Activated T-helper 1 cell treated with anti-CD3 and anti-CD28 coated beads, Interleukin-12 subunit alpha, Interleukin-12 subunit beta, Interleukin-2, Interleukin-4 antibody, amounts not matched to agents 30 ng/mL and 10 ng/mL and 1 ng/mL, durations not matched to agents 14 hours and 24 hours and 36 hours (primary cell): ENCODE measurements at regions of chr16 and their contacts with region 1.

Region 1: GRCh38 chr16:8963825-8964441 is at the start of gene USP7:
- DNase-seq: peak; percentile 92
- H3K4me3 Mint-ChIP-seq: peak within 1 kb of the TSS; percentile 97
- H3K27ac Mint-ChIP-seq: peak within 1 kb of the TSS; percentile 93
- H3K4me1 Mint-ChIP-seq: peaks cover 41% of the 10 kb centered on the region
- H3K27me3 Mint-ChIP-seq: peaks cover 20% of the 10 kb centered on the region
- total RNA-seq, gene USP7: 184 and 188 TPM in 2 replicates

Region 2: DNA sequence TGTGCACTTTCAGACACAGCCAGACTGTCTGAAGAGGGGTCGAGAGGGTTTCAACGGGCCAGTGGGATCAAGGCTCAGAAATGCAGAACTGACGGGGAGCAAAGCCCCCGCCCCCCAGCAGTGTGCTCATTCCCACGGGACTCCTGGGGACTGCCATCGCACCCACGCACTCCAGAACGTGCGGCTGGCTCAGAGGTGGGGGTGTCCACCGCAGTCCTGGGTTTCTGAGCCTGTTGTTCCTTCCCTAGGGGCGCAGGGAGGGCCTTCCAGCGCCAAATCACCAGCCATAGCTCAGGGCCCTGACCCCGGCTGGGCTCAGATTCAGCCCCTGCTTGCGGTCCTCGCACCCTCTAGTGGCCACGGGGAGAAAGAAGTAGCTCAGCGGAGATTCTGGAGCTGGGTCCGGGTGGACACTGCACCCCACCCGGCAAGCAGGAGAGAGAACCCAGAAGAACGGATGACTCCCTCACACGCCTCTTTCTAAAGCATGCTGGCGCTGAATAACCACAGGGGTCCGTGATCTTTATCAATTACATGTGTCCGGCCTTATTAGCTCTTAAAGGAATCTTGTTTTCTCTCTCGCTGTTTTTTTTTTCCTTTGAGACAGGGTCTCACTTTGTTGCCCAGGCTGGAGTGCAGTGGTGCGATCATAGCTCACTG is 44.8 kb after region 1 on chr16:
- intact Hi-C with region 1: loop called (anchors 2 kb)
- DNase-seq: peak; percentile 42
- H3K4me3 Mint-ChIP-seq: no peak overlapping the region
- H3K27ac Mint-ChIP-seq: no peak overlapping the region
- H3K4me1 Mint-ChIP-seq: no peaks in the 10 kb centered on the region
- H3K27me3 Mint-ChIP-seq: peaks cover 8% of the 10 kb centered on the region

Region 3: GRCh38 chr16:9047686-9048301 is 83.9 kb after region 1 on chr16:
- intact Hi-C with region 1: loop called (anchors 5 kb)
- DNase-seq: peak; percentile 53
- H3K4me3 Mint-ChIP-seq: peak overlapping the region; percentile 20
- H3K27ac Mint-ChIP-seq: peak overlapping the region; percentile 61
- H3K4me1 Mint-ChIP-seq: peaks cover 27% of the 10 kb centered on the region
- H3K27me3 Mint-ChIP-seq: no peaks in the 10 kb centered on the region

Region 4: DNA sequence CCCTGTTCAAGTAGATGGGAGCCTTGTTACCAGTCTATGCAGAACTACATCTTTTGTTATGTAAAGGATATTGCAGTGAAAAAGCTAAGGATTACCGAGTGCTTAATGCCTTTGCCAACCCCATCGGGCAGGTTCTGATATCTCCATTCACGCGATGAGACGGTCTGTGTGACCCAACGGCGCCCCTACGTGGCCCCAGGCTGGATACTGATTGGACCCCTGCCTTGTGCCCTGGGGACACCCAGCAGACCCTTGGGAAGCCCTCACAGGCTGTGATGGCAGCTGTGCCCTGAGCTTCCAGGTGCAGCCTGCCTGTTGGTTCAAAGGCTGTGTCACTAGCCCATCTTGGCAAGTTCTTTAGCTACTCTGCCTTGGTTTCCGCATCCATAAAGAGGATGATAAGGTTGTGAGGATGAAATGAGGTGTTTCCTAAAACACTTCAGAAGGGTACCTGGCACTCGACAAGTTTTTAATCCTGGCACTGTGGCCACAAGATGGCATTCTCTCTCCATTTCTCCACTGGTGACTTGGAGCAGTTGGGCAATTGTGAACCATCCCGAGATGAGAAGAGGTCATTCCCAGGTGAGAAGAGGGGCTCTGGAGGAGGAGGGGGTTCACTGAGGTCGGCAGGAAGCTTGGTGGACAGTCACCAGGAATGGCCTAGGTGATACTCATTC is 161.1 kb after region 1 on chr16:
- intact Hi-C with region 1: loop called (anchors 5 kb)
- DNase-seq: no peak
- H3K4me3 Mint-ChIP-seq: no peak overlapping the region
- H3K27ac Mint-ChIP-seq: peak overlapping the region; percentile 14
- H3K4me1 Mint-ChIP-seq: peaks cover 52% of the 10 kb centered on the region
- H3K27me3 Mint-ChIP-seq: no peaks in the 10 kb centered on the region